GM13976 (cell line): ENCODE measurements at regions of chr2 and their contacts with region 1.

Region 1: GRCh38 chr2:196088203-196088602 is 19.6 kb upstream of the DNAH7 start:
- DNase-seq: no peak
- CTCF ChIP-seq: no peak

Region 2: DNA sequence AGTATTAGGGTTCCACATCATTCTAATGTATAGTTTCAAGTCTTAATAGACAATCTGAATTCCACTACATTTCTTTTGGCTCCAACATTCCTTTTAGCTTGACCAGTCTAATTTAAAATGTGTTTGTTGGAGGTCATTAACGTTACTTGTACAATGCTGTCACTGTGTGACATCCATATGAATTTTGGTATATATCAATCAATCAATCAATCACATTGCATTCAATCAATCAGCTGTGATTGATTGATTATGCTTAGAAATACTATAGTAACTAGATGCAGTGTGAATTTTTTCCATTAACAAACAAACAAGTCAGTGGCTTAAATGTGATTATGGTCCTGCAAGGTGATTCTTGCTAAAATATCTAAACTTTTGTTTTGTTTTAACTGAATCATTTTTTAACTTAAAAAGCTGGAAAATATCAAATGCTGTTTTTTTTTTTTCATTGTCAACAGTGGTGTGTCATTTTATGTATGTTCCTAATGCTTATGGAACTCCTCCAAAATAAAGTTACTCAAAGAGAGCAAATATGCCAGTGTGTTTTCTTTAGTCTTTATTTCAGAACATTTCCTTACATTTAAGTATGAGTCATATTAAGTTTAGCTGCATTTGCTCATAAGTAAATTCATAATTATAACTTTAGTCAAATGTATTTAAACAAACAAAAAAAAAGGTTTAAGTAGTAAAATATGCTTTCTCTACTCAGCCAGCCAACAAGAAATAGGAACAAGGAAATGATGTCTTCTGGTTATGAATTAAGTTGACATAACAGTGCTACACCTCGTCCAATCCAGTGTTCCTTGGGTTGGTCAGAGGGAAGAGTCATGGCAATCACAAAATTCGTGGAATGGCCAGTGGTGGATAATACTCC is 350.8 kb before region 1 on chr2:
- in situ Hi-C with region 1: no loop called
- DNase-seq: no peak
- CTCF ChIP-seq: no peak

Region 3: DNA sequence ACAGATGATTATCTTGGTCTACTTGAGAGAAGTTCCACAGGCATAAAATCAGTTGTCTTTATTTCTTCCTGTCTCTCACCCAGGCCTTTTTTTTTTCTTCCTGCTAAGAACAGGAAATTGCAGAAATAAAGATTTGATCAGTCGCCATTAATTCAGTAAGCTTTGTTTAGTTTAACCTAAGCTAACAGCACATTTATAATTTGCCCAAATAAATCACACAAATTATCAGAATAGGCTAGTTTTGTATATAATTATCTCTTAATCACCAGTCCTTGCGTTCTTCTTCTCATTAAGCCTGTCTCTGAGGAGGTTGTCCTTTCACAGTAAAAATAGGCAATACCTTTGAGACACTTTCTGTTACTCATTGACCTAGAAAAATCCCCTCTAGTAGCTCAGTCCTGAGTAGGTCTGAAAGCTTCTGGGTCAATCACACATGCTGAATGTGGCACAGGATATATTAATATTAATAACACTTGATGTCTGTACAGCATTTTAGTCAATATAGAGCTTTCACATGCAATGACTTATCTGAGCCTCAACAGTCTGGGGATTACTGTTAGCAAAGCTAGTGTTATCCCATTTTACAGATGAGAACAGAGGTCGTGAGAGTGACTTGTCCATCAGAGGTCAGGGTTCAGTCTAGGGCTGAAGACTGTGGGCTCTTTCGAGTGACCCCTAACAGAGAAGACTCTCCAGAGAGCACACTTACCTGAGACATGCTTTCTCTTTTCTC is 94.4 kb after region 1 on chr2:
- in situ Hi-C with region 1: no loop called
- DNase-seq: peak; percentile 36
- CTCF ChIP-seq: no peak

Region 4: GRCh38 chr2:196277002-196277401 is 188.8 kb after region 1 on chr2:
- in situ Hi-C with region 1: loop called (anchors 10 kb)
- DNase-seq: peak; percentile 57
- CTCF ChIP-seq: peak; percentile 41

Region 5: GRCh38 chr2:196289000-196289399 is 200.8 kb after region 1 on chr2:
- in situ Hi-C with region 1: no loop called
- DNase-seq: peak; percentile 32
- CTCF ChIP-seq: no peak

Region 6: DNA sequence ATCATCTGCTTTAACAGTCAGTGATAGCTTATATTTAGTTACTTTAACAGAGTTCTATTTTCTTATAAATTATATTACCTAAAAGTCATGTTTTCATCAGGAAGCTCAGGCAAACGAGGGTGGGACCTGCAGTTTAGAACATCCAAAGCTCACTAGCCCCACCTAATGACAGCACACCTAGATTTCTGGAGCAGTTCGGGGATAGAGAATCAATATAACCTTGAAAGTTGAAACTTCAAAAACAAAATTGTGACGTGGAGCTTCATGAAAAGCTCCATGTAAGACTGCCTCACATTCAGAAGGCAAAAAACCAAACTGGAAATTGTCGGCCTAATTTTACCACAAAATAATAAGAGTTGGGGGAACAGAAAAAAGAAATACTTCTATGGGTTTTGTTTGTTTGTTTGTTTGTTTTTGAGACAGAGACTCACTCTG is 365.4 kb after region 1 on chr2:
- in situ Hi-C with region 1: loop called (anchors 25 kb)
- DNase-seq: peak; percentile 34
- CTCF ChIP-seq: peak; percentile 70

Region 7: DNA sequence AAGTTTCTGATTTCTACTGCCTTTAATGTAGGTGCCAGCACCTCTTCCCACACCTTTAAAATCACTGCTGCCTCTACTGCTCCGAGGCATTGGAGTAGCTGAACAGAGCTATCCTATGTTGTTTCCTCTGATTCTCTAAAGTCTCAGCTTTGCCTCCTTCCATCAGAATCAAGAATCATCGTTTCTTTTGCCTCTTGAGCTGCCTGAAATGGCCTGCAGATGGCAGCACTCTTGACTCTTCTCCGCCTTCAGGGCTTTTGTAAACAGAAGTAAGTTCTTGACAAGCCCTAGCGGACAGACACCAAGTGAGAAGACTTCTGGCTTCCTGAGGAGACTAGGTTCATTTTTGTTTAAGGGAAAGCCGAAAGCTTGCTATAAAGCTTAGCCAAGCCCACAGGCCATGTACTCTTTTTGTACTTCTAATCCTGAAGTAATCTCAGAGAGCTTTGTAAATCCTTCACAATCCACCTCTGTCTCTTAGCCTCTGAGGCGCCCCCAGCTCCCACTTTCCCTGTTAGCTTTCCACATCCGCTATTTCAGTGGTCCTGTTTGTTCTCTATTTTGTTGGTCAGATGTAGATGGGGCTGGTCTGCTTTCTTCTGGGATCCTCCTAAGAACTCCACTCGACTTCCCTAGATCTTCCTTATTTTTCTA is 662.9 kb after region 1 on chr2:
- in situ Hi-C with region 1: loop called (anchors 25 kb)
- DNase-seq: peak; percentile 69
- CTCF ChIP-seq: peak; percentile 86